ENCODE measurements at regions of chr7 and their contacts with region 1.

Region 1: GRCh38 chr7:83655951-83656556 is 7.1 kb upstream of the SEMA3E start:
- DNase-seq: no peak
- H3K4me3 Mint-ChIP-seq: no peak overlapping the region
- H3K27ac Mint-ChIP-seq: no peak overlapping the region
- H3K4me1 Mint-ChIP-seq: no peaks in the 10 kb centered on the region
- H3K27me3 Mint-ChIP-seq: peaks cover 2% of the 10 kb centered on the region

Region 2: DNA sequence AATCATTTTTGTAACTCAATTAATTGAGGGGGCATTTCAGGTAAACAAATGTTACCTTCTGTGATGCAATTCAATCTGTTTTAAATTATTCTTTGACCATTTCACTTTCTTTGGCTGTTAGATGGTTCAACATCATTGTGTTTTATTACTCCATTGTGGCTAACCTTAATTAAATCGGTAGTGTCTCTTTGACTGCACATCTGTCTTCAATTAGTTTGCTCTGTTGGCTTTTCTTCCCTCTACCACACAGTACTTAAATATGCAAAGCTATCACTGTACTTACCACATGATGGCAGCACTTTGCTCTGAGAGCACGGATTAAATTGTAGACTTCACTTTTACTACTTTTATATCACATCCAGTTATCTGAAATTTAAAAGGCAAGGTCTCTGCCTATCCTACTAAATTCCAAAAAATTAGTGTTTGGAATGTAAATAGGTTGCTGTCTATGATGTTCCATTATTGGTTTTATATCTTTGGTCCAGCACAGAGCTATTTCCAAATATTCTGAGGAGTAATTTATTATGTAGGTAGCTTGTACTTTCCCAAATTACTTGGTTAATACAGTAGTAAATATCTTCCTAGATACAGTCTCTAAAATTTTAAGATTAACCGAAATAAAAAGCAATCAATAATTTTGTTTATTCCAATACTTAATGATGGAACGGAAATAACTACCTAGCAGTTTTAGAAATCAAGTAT is 845.3 kb before region 1 on chr7:
- intact Hi-C with region 1: loop called (anchors 5 kb)
- DNase-seq: no peak
- H3K4me3 Mint-ChIP-seq: no peak overlapping the region
- H3K27ac Mint-ChIP-seq: no peak overlapping the region
- H3K4me1 Mint-ChIP-seq: no peaks in the 10 kb centered on the region
- H3K27me3 Mint-ChIP-seq: no peaks in the 10 kb centered on the region

Region 3: DNA sequence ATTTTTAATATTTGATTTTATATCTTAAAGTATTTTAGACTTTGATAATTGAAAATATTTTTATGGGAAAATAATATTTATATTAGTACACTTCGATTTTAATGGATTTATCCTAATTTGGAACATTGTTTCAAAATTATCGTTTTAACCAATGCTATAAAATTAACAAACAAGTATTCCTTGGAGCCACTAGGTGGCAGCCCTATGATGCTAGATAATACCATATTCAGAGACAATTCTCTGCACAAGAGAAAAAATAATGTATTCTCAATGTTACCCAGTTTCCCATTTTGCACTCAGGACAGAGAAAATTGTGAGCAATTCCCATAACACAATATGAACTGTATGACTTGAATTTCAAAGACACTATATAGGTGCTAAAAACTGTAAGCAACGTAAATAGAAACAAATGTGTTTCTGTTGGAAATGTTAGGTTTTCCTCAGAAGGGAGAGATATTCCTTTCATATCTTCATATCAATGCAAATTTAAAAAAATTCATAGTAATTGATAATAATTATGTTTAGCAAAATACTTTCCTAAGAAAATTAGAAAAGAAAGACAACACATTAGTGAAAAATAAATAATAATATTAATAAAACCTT is 245.0 kb before region 1 on chr7:
- intact Hi-C with region 1: loop called (anchors 1 kb)
- DNase-seq: no peak
- H3K4me3 Mint-ChIP-seq: no peak overlapping the region
- H3K27ac Mint-ChIP-seq: no peak overlapping the region
- H3K4me1 Mint-ChIP-seq: no peaks in the 10 kb centered on the region
- H3K27me3 Mint-ChIP-seq: no peaks in the 10 kb centered on the region